ENCODE measurements at regions of chr5 and their contacts with region 1.

Region 1: GRCh38 chr5:96934708-96935558 is 947 bp upstream of the LNPEP start:
- DNase-seq: peak; percentile 97
- ATAC-seq: peak; percentile 69
- H3K4me3 Mint-ChIP-seq: peak overlapping the region; percentile 98
- H3K27ac Mint-ChIP-seq: peak overlapping the region; percentile 98
- H3K4me1 Mint-ChIP-seq: peaks cover 78% of the 10 kb centered on the region
- H3K27me3 Mint-ChIP-seq: no peaks in the 10 kb centered on the region
- CTCF ChIP-seq: no peak

Region 2: GRCh38 chr5:95822542-95823181 is 1112.3 kb before region 1 on chr5 and contains the start of gene GLRX:
- CTCF ChIA-PET with region 1: no interaction called
- POLR2A ChIA-PET with region 1: no interaction called
- intact Hi-C with region 1: loop called (anchors 2 kb)
- DNase-seq: no peak
- ATAC-seq: peak; percentile 30
- H3K4me3 Mint-ChIP-seq: peak within 1 kb of the TSS; percentile 95
- H3K27ac Mint-ChIP-seq: peak within 1 kb of the TSS; percentile 98
- H3K4me1 Mint-ChIP-seq: peaks cover 72% of the 10 kb centered on the region
- H3K27me3 Mint-ChIP-seq: no peaks in the 10 kb centered on the region
- CTCF ChIP-seq: no peak
- total RNA-seq, gene GLRX: 55.4 and 60.2 TPM in 2 replicates

Region 3: DNA sequence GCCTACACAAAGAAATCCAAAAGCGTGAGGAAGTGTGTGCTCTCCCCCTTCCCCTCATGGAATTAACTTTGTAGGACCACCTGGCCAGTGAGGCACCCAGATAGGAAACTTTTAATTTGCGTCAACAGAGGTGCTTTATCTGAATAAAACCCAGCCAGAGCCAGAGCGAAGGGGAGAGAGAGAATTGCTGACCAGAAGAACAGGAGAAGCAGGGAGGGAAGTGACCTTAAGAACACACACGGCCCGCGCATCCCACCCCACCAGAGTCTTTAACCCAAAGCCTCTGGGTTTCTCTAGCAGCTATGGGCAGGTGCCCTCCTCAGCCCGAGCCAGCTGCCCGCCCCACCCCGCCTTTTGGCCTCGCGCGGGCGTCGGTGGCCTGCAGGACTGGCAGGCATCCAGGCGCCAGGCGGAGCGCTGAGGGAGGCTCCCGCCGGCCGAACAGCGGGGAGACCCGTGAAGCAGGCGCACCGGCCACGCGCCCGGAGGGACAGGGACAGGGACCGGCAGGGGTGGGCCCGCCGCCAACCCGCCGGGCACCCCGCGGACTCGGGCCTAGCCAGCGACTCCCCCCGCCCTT is 127.8 kb before region 1 on chr5:
- CTCF ChIA-PET with region 1: no interaction called
- POLR2A ChIA-PET with region 1: interaction called, 26 read pairs
- intact Hi-C with region 1: loop called (anchors 1 kb)
- DNase-seq: no peak
- ATAC-seq: peak; percentile 12
- H3K4me3 Mint-ChIP-seq: peak overlapping the region; percentile 97
- H3K27ac Mint-ChIP-seq: peak overlapping the region; percentile 99
- H3K4me1 Mint-ChIP-seq: peaks cover 48% of the 10 kb centered on the region
- H3K27me3 Mint-ChIP-seq: no peaks in the 10 kb centered on the region
- CTCF ChIP-seq: no peak

Region 4: GRCh38 chr5:96896806-96897205 is 38.1 kb before region 1 on chr5:
- CTCF ChIA-PET with region 1: interaction called, 4 read pairs
- POLR2A ChIA-PET with region 1: interaction called, 58 read pairs
- intact Hi-C with region 1: loop called (anchors 1 kb)
- DNase-seq: peak; percentile 39
- ATAC-seq: peak; percentile 94
- H3K4me3 Mint-ChIP-seq: peak overlapping the region; percentile 80
- H3K27ac Mint-ChIP-seq: peak overlapping the region; percentile 93
- H3K4me1 Mint-ChIP-seq: peaks cover 54% of the 10 kb centered on the region
- H3K27me3 Mint-ChIP-seq: no peaks in the 10 kb centered on the region
- CTCF ChIP-seq: no peak

Region 5: GRCh38 chr5:96963267-96963666 is 28.3 kb after region 1 on chr5:
- CTCF ChIA-PET with region 1: interaction called, 3 read pairs
- POLR2A ChIA-PET with region 1: interaction called, 29 read pairs
- intact Hi-C with region 1: loop called (anchors 1 kb)
- DNase-seq: no peak
- ATAC-seq: peak; percentile 59
- H3K4me3 Mint-ChIP-seq: no peak overlapping the region
- H3K27ac Mint-ChIP-seq: peak overlapping the region; percentile 90
- H3K4me1 Mint-ChIP-seq: peaks cover 84% of the 10 kb centered on the region
- H3K27me3 Mint-ChIP-seq: no peaks in the 10 kb centered on the region
- CTCF ChIP-seq: no peak

Region 6: DNA sequence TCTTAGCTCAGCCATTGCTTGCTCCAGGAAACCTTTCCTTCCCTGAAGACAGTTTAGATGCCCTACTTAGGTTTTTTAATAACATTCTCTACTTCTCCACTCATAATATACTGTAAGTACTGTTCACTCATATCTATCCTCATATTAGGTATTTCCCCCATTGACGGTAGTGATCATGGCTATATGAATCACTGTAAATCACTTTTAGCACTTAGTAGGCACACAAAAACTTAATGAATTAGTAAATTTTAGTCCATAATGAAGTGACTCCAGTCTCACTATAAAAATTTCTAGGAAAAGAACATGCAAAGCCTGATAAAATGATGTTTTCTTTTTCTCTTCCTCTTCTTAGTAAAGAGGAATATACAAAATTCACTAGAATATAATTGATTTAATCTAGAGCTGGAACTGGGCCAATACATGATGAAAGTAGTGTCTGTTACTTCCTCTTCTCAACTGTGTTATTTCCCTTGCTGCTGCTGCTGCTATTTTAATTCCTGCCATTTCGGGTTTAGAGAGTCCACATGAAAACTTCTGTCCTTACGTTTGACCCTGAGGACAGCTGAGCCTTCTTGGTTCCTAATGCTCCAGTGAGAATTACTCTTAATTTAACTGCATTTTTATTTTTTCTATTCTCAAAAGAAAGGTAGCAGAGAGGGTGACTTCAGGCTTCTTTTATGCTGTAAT is 74.4 kb after region 1 on chr5:
- CTCF ChIA-PET with region 1: interaction called, 4 read pairs
- POLR2A ChIA-PET with region 1: interaction called, 11 read pairs
- intact Hi-C with region 1: loop called (anchors 1 kb)
- DNase-seq: no peak
- ATAC-seq: peak; percentile 83
- H3K4me3 Mint-ChIP-seq: peak overlapping the region; percentile 66
- H3K27ac Mint-ChIP-seq: peak overlapping the region; percentile 91
- H3K4me1 Mint-ChIP-seq: peaks cover 24% of the 10 kb centered on the region
- H3K27me3 Mint-ChIP-seq: no peaks in the 10 kb centered on the region
- CTCF ChIP-seq: no peak

Region 7: DNA sequence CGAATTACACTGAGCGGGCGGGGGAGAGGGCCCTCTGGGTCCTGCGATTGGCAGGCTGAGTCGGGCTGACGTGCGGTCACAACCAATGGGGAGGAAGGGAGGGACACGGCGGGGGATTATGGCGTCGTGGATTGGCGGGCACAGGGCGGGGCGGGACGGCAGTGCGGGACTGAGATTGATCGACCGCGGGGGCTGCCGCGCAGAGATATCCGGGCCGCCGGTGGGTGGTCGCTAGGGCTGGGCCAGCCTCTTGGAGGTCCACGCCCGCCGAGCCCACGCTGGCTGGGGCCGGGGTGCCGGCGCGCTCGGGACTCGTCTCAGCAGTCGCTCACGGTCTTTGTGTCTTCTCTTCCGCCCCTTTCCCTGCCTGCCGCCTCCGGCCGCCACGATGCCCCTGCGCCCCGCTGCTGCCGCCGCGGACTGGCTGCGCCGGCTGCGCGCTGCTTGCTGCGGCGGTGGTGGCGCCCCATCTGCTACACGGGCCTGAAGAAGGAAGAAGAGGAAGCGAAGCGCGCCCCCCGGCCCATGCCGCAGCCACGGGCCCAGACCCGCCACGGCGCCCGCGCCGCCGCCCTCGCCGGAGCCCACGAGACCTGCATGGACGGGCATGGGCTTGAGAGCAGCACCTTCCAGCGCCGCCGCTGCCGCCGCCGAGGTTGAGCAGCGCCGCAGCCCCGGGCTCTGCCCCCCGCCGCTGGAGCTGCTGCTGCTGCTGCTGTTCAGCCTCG is 1838.7 kb after region 1 on chr5 and contains the start of gene RGMB:
- CTCF ChIA-PET with region 1: no interaction called
- POLR2A ChIA-PET with region 1: no interaction called
- intact Hi-C with region 1: loop called (anchors 1 kb)
- DNase-seq: peak; percentile 83
- ATAC-seq: peak; percentile 89
- H3K4me3 Mint-ChIP-seq: peak within 1 kb of the TSS; percentile 96
- H3K27ac Mint-ChIP-seq: peak within 1 kb of the TSS; percentile 96
- H3K4me1 Mint-ChIP-seq: peaks cover 55% of the 10 kb centered on the region
- H3K27me3 Mint-ChIP-seq: peaks cover 2% of the 10 kb centered on the region
- CTCF ChIP-seq: no peak
- total RNA-seq, gene RGMB: 12.7 and 13.8 TPM in 2 replicates

Measured in activated B cell treated with CpG ODN at 0.5 μM for 24 hours (primary cell).